Activated B cell treated with CpG ODN at 0.5 μM for 24 hours (primary cell): ENCODE measurements at regions of chr1 and their contacts with region 1.

Region 1: GRCh38 chr1:151327223-151327902 is at the start of gene PI4KB:
- DNase-seq: peak; percentile 76
- ATAC-seq: peak; percentile 92
- H3K4me3 Mint-ChIP-seq: peak within 1 kb of the TSS; percentile 97
- H3K27ac Mint-ChIP-seq: peak within 1 kb of the TSS; percentile 99
- H3K4me1 Mint-ChIP-seq: peaks cover 42% of the 10 kb centered on the region
- H3K27me3 Mint-ChIP-seq: no peaks in the 10 kb centered on the region
- CTCF ChIP-seq: no peak
- total RNA-seq, gene PI4KB: 112 and 113 TPM in 2 replicates

Region 2: GRCh38 chr1:151047925-151048645 is 279.3 kb before region 1 on chr1:
- CTCF ChIA-PET with region 1: no interaction called
- POLR2A ChIA-PET with region 1: interaction called, 12 read pairs
- intact Hi-C with region 1: no loop called
- DNase-seq: peak; percentile 58
- ATAC-seq: peak; percentile 74
- H3K4me3 Mint-ChIP-seq: peak overlapping the region; percentile 94
- H3K27ac Mint-ChIP-seq: peak overlapping the region; percentile 89
- H3K4me1 Mint-ChIP-seq: peaks cover 42% of the 10 kb centered on the region
- H3K27me3 Mint-ChIP-seq: no peaks in the 10 kb centered on the region
- CTCF ChIP-seq: no peak

Region 3: DNA sequence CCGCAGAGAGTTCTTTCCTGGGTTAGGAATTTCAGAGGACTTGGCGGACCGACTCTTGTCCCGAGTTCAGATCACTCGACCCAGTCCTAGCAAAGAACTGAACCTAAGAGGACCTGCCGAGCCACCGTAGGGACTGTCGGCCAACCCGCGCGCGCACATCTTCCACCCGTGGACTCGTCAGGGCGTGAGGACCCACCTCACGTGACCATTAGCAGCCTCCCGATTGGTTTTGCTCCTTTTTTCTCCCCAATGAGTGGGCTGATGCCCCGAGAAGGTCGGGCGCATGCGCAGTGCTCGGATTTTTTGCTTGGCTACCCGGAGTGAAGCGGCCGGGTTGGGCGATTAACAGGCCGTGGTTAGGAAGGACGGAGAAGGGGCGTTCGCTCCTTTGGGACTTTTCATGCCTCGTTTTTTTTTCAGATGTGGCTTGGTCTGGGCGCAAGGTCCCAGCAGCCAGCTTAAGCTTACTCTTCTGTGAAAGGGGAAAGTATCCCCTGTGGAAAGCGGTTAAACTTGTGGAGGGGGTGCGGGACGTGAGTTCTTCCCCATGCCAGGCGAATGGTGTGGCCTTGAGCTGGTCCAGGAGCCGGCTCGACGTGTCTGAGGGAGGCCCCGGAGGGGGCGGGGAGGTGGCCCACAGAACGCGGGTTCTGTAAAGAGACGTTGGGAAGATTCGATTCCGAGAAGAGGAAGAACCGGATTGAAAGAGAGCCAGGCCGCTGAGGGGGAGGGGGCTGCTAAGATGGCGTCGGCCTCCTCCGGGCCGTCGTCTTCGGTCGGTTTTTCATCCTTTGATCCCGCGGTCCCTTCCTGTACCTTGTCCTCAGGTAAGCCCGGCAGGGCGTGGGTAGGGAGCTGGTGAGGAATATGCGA is 128.9 kb before region 1 on chr1 and contains the start of gene PIP5K1A:
- CTCF ChIA-PET with region 1: no interaction called
- POLR2A ChIA-PET with region 1: interaction called, 4 read pairs
- intact Hi-C with region 1: loop called (anchors 1 kb)
- DNase-seq: peak; percentile 94
- ATAC-seq: peak; percentile 93
- H3K4me3 Mint-ChIP-seq: peak within 1 kb of the TSS; percentile 99
- H3K27ac Mint-ChIP-seq: peak within 1 kb of the TSS; percentile 98
- H3K4me1 Mint-ChIP-seq: peaks cover 47% of the 10 kb centered on the region
- H3K27me3 Mint-ChIP-seq: no peaks in the 10 kb centered on the region
- CTCF ChIP-seq: no peak
- total RNA-seq, gene PIP5K1A: 63.2 and 77.7 TPM in 2 replicates

Region 4: GRCh38 chr1:151311589-151312331 is 15.6 kb before region 1 on chr1:
- CTCF ChIA-PET with region 1: interaction called, 3 read pairs
- POLR2A ChIA-PET with region 1: interaction called, 11 read pairs
- intact Hi-C with region 1: no loop called
- DNase-seq: no peak
- ATAC-seq: peak; percentile 98
- H3K4me3 Mint-ChIP-seq: no peak overlapping the region
- H3K27ac Mint-ChIP-seq: peak overlapping the region; percentile 19
- H3K4me1 Mint-ChIP-seq: peaks cover 21% of the 10 kb centered on the region
- H3K27me3 Mint-ChIP-seq: no peaks in the 10 kb centered on the region
- CTCF ChIP-seq: no peak

Region 5: GRCh38 chr1:151346769-151347522 is 19.6 kb after region 1 on chr1 and contains the start of gene RFX5:
- CTCF ChIA-PET with region 1: interaction called, 5 read pairs
- POLR2A ChIA-PET with region 1: interaction called, 41 read pairs
- intact Hi-C with region 1: loop called (anchors 1 kb)
- DNase-seq: peak; percentile 77
- ATAC-seq: peak; percentile 91
- H3K4me3 Mint-ChIP-seq: peak within 1 kb of the TSS; percentile 98
- H3K27ac Mint-ChIP-seq: peak within 1 kb of the TSS; percentile 100
- H3K4me1 Mint-ChIP-seq: peaks cover 55% of the 10 kb centered on the region
- H3K27me3 Mint-ChIP-seq: no peaks in the 10 kb centered on the region
- CTCF ChIP-seq: no peak
- total RNA-seq, gene RFX5: 222 and 262 TPM in 2 replicates

Region 6: GRCh38 chr1:151790071-151790940 is 462.9 kb after region 1 on chr1 and contains the start of gene TDRKH:
- CTCF ChIA-PET with region 1: no interaction called
- POLR2A ChIA-PET with region 1: no interaction called
- intact Hi-C with region 1: loop called (anchors 1 kb)
- DNase-seq: peak; percentile 91
- ATAC-seq: peak; percentile 93
- H3K4me3 Mint-ChIP-seq: peak within 1 kb of the TSS; percentile 99
- H3K27ac Mint-ChIP-seq: peak within 1 kb of the TSS; percentile 91
- H3K4me1 Mint-ChIP-seq: peaks cover 21% of the 10 kb centered on the region
- H3K27me3 Mint-ChIP-seq: peaks cover 3% of the 10 kb centered on the region
- CTCF ChIP-seq: no peak
- total RNA-seq, gene TDRKH: 15.1 and 15.6 TPM in 2 replicates